BJ (cell line): ENCODE measurements at regions of chr19 and their contacts with region 1.

Region 1: DNA sequence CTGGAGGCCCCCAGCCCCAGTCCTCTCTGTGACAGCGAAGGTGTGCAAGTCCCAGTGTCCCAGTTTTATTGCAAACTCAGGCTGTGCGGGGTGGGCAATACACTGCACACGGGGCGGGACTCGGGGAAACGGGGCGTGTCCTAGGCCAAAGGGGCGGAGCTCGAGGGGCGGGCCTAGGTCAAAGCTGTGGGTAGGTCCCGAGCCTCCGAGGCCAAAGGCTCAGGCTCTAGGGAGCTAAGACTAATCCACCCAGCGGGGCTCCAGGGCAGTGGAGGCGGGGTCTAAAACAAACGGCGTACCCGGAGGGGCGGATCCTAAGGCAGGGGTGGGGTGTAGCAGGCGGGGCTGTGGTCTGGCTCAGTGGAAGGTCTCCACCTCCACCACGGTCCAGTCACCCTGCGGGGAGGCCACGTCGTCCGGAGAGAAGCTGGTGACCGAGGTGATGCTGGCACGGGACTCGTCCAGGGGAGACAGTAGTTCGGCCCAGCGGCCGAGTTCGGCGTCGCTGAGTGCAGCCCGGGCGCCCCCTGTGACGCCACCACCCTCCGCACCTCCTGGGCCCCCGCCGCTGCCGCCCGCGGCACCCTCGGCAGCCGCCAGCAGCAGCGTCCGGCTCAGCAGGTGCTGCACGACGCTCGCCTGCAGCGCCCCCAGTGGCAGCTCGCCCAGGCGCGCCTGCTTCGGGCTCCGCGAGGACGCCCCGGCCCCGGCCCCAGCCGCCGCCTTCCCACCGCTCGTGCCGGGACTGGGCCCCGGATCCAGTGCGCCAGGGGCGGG is 5.3 kb downstream of the PRR36 start:
- DNase-seq: no peak
- H3K4me3 ChIP-seq: peak overlapping the region; percentile 51
- H3K27me3 ChIP-seq: peaks cover 10% of the 10 kb centered on the region
- CTCF ChIP-seq: 0 out of 2 replicates have a peak, but pooled peaks have one; percentile 11

Region 2: DNA sequence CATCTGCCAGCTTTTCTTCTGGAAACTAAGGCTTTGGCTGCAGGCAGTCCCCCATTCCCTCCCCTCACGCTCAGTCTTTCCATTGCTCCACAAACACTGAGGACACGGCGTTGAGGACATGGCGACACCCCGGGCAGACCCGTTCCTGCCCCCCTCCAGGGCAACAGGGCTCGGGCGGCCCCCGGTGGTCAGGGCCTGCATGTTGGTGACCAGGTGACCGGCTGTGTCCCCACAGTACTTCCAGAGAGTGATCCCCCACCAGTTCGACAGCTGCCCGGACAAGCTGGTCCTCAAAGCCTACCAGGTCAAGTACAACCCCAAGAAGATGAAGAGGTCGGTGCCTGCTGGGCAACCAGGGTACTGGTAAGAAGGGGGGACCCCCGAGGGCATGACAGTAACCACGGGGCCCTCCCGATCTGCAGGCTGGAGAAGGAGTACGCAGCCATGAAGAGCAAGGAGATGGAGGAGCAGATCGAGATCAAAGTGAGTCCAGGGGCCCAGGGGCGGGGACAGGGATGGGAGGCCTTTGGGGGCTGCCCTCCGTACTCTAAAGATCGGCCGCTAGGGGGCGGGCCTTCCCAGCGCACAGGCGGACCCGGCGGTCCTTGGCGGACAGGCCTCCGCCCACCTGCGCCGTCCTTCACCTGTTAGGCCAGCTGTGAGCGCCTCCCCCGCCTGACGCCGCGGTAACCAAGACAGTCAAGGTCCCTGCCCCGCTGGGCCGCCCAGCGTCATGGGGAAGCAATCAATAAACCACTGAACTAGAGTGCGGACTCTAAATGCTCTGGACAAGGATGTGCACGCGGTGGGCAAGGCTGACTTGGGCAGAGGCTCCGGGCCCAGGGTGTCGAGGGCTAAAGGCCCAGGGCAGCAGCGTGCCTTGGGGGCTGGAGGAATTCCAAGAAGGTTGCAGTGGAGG is 15.8 kb before region 1 on chr19:
- CTCF ChIA-PET with region 1: interaction called, 19 read pairs
- POLR2A ChIA-PET with region 1: no interaction called
- DNase-seq: no peak
- H3K4me3 ChIP-seq: no peak overlapping the region
- H3K27me3 ChIP-seq: no peaks in the 10 kb centered on the region
- CTCF ChIP-seq: peak; percentile 87

Region 3: GRCh38 chr19:7858109-7858830 is 10.6 kb before region 1 on chr19:
- CTCF ChIA-PET with region 1: interaction called, 19 read pairs
- POLR2A ChIA-PET with region 1: no interaction called
- DNase-seq: no peak
- H3K4me3 ChIP-seq: no peak overlapping the region
- H3K27me3 ChIP-seq: no peaks in the 10 kb centered on the region
- CTCF ChIP-seq: no peak

Region 4: GRCh38 chr19:7888145-7888825 is 19.4 kb after region 1 on chr19 and contains the start of gene LRRC8E:
- CTCF ChIA-PET with region 1: interaction called, 24 read pairs
- POLR2A ChIA-PET with region 1: interaction called, 4 read pairs
- DNase-seq: no peak
- H3K4me3 ChIP-seq: peak within 1 kb of the TSS; percentile 88
- H3K27me3 ChIP-seq: no peaks in the 10 kb centered on the region
- CTCF ChIP-seq: no peak
- polyA plus RNA-seq, gene LRRC8E: 6.0 and 8.6 TPM in 2 replicates

Region 5: DNA sequence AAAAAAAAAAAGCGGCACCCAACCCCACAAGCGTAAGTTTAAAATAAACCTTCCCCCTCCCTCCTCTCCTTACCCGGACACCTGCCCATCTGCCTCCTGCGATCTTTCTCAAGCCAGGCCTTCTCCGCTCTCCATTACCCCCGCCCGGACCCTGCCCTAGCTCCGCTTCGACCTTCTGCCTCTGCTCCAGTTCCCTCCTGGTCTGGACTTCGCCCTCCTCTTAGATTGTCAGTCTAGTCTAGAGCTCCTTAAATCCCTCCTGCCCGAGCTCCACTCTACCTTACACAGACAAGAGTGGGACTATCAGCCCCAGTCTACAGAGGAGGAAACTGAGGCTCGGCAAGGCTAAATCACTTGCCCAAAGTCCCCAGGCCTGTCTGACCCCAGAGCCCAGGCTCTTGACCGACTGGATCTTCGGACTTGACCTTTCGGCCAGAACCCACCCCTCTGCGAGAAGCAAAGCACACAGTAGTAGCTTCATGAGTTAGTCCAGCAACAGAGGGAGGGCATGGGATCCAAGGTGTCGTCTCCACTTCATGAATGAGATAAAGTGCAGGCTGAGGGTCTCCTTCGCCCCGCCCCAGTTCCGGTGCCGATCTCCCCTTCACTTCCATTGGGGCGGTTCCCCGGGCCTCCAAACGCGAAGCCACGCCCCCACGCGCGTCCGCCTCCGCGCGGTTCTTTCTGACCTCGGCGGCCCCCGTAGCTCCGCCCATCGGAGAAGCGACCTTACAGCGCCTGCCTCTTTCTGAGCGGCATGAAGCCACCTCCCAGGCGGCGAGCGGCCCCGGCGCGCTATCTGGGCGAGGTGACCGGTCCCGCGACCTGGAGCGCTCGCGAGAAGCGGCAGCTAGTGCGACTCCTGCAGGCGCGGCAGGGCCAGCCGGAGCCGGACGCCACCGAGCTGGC is 51.0 kb after region 1 on chr19 and contains the start of gene SNAPC2:
- CTCF ChIA-PET with region 1: interaction called, 13 read pairs
- POLR2A ChIA-PET with region 1: no interaction called
- DNase-seq: peak; percentile 56
- H3K4me3 ChIP-seq: peak within 1 kb of the TSS; percentile 82
- H3K27me3 ChIP-seq: no peaks in the 10 kb centered on the region
- CTCF ChIP-seq: no peak
- polyA plus RNA-seq, gene SNAPC2: 16.6 and 28.2 TPM in 2 replicates